ENCODE measurements at regions of chr18 and their contacts with region 1.

Region 1: DNA sequence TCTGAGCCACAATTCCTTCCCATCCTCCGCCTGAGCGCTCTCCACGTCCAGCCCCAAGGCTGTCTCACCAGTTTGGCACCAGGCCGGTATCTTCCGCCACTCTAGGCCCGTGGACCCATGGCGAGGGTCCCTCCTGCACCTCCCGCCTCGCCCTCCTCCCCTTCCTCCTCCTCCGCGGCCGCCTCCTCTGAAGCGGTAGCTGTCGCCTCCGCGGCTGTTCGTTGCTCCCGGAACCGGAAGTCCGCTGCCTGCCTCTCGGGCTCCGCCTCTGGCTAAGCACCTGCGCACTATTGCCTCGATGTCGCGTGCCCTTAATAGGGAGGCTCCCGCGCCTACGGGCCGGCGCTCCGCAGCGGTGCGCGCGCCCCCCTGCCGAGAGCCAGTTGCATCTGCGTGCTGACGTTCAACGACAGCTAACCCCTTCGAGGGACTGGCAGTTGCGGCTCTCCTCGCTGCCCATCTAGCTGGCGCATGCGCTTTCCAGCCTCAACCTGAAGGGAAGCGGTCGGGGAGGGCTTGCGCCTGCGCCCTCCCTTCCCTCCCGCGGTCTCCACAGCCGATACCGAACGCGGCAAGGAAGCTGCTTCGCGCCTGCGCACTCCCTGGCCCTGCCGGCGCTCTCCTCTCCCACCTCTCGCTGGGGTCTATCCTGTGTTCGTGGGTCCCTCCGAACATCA is at the start of gene MBD1:
- DNase-seq: peak; percentile 90 to 99 (median 97)
- ATAC-seq: peak; percentile 94
- H3K4me3 ChIP-seq: peak within 1 kb of the TSS; percentile 94
- H3K4me3 Mint-ChIP-seq: peak within 1 kb of the TSS; percentile 90 to 99 (median 97)
- H3K27ac ChIP-seq: peak within 1 kb of the TSS; percentile 88
- H3K27ac Mint-ChIP-seq: peak within 1 kb of the TSS; percentile 93 to 99 (median 97)
- H3K4me1 ChIP-seq: peaks cover 21 to 33% of the 10 kb centered on the region in 2 donors
- H3K4me1 Mint-ChIP-seq: peaks cover 24 to 53% (median 45%) of the 10 kb centered on the region in 7 donors
- H3K27me3 ChIP-seq: no peaks in the 10 kb centered on the region
- H3K27me3 Mint-ChIP-seq: peaks cover 0 to 2% (median 0%) of the 10 kb centered on the region in 5 donors
- total RNA-seq, gene MBD1: 97.5 to 158 (median 118) TPM

Region 2: DNA sequence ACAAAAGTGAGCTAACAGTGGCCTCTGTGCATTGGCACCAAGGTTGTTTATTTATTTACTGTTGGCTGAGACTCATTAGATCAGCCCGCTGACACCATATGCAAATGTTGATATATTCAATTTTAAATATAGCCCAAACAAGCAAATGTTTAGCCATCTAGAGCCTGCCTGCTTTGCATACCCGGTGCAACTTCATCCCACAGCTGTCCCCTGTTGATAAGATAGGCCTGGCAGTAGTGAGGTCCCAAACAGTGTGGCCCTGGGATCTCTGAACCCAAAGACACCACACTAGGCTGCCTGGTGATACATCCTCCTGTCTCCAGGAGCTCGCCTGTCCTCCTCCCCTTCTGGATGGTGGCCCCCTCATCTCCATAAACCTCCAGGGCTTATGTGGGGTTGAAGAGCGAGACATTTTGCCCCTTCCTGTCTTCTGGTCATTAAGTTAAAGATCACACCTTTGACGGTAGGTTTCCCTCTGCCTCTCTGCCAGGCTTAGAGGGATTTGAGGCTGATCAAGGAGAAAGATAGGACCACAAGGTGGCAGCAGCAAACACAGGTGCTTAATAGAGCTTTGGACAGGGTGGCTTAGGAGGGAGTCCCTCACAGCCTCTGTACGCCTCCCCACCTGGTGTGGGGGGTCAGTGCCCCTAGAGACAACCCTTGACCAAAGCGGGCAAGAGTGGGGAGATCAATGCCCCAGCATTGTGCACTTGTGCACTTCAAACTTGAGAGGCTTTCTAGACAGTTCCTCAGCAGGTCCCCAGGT is 62.8 kb before region 1 on chr18:
- CTCF ChIA-PET with region 1: no interaction called
- POLR2A ChIA-PET with region 1: no interaction called
- intact Hi-C with region 1: loop called in 1 of 2 experiments (anchors 2 kb)
- DNase-seq: peak in 4 of 9 donors; percentile 19 to 37 (median 28)
- ATAC-seq: peak; percentile 54
- H3K4me3 ChIP-seq: no peak overlapping the region
- H3K4me3 Mint-ChIP-seq: no peak overlapping the region
- H3K27ac ChIP-seq: no peak overlapping the region
- H3K27ac Mint-ChIP-seq: no peak overlapping the region
- H3K4me1 ChIP-seq: no peaks in the 10 kb centered on the region
- H3K4me1 Mint-ChIP-seq: no peaks in the 10 kb centered on the region
- H3K27me3 ChIP-seq: no peaks in the 10 kb centered on the region
- H3K27me3 Mint-ChIP-seq: peaks cover 21 to 47% (median 29%) of the 10 kb centered on the region in 5 donors

Region 3: DNA sequence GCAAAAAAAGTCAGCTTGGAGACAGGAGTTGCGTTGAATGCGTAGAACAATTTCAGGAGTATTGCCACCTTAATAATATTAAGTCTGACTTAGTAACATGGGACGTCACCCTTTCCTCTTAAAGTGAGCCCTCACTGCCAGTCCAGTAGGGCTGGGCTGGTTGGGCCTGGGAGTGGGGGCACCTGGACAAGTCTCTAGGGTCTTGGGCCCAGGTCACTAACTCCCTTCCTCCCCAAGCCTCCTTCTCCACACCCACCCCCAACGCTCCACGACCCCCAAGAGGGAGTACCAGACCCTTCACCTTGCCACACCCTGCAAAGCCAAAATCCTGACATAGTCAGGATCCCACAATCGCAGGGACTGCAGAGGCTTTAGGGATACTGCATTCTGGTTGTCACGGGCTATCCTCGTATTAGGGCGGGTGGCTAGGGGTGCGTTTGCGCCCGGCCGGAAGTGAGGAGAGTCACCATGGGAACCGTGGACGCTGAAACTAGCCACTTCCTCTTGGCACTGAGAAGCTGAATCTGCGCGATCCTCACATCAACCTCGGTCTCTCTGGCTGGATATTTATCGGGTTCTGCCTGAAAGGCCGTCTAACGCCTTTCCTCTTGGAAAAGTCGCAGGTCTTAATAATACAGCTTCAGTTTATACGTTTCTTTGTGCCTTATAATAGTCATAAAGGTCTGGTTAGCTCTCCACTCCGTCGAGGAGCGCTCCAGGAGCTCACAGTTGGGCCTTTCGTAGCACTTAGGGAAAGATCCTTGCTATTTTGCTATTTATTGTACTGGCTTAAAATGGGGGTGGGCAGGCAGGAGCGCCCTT is 16.4 kb after region 1 on chr18:
- CTCF ChIA-PET with region 1: interaction called, 3 read pairs
- POLR2A ChIA-PET with region 1: interaction called, 4 read pairs
- intact Hi-C with region 1: loop called in 1 of 2 experiments (anchors 1 kb)
- DNase-seq: peak in 8 of 9 donors; percentile 48 to 70 (median 68)
- ATAC-seq: peak; percentile 95
- H3K4me3 ChIP-seq: peak overlapping the region; percentile 57
- H3K4me3 Mint-ChIP-seq: peak overlapping the region; percentile 52 to 90 (median 84)
- H3K27ac ChIP-seq: no peak overlapping the region
- H3K27ac Mint-ChIP-seq: peak overlapping the region in 4 of 9 donors; percentile 43 to 76 (median 59)
- H3K4me1 ChIP-seq: peaks cover 0 to 11% of the 10 kb centered on the region in 2 donors
- H3K4me1 Mint-ChIP-seq: peaks cover 4 to 14% (median 7%) of the 10 kb centered on the region in 7 donors
- H3K27me3 ChIP-seq: no peaks in the 10 kb centered on the region
- H3K27me3 Mint-ChIP-seq: peaks cover 10 to 48% (median 19%) of the 10 kb centered on the region in 5 donors

Region 4: GRCh38 chr18:50307738-50308470 is 26.5 kb after region 1 on chr18:
- CTCF ChIA-PET with region 1: no interaction called
- POLR2A ChIA-PET with region 1: interaction called, 19 read pairs
- intact Hi-C with region 1: loop called (anchors 1 kb)
- DNase-seq: peak; percentile 70 to 93 (median 89)
- ATAC-seq: peak; percentile 96
- H3K4me3 ChIP-seq: peak overlapping the region; percentile 45
- H3K4me3 Mint-ChIP-seq: peak overlapping the region; percentile 76 to 97 (median 92)
- H3K27ac ChIP-seq: peak overlapping the region; percentile 65
- H3K27ac Mint-ChIP-seq: peak overlapping the region; percentile 52 to 93 (median 82)
- H3K4me1 ChIP-seq: peaks cover 0 to 8% of the 10 kb centered on the region in 2 donors
- H3K4me1 Mint-ChIP-seq: peaks cover 0 to 20% (median 16%) of the 10 kb centered on the region in 7 donors
- H3K27me3 ChIP-seq: peaks cover 0 to 3% of the 10 kb centered on the region in 2 donors
- H3K27me3 Mint-ChIP-seq: peaks cover 0 to 35% (median 19%) of the 10 kb centered on the region in 5 donors

Region 5: GRCh38 chr18:50429207-50429948 is 147.9 kb after region 1 on chr18:
- CTCF ChIA-PET with region 1: no interaction called
- POLR2A ChIA-PET with region 1: no interaction called
- intact Hi-C with region 1: loop called in 1 of 2 experiments (anchors 5 kb)
- DNase-seq: peak in 5 of 9 donors; percentile 4 to 16 (median 4)
- ATAC-seq: no peak
- H3K4me3 ChIP-seq: no peak overlapping the region
- H3K4me3 Mint-ChIP-seq: no peak overlapping the region
- H3K27ac ChIP-seq: no peak overlapping the region
- H3K27ac Mint-ChIP-seq: no peak overlapping the region
- H3K4me1 ChIP-seq: no peaks in the 10 kb centered on the region
- H3K4me1 Mint-ChIP-seq: no peaks in the 10 kb centered on the region
- H3K27me3 ChIP-seq: no peaks in the 10 kb centered on the region
- H3K27me3 Mint-ChIP-seq: peaks cover 8 to 19% (median 13%) of the 10 kb centered on the region in 5 donors

Measured in naive thymus-derived CD4-positive, alpha-beta T cell (primary cell).